ENCODE measurements at regions of chr6 and their contacts with region 1.

Region 1: GRCh38 chr6:17808609-17809008 is 101.9 kb upstream of the NUP153 start:
- DNase-seq: no peak
- ATAC-seq: no peak
- H3K4me3 ChIP-seq: no peak overlapping the region
- H3K27ac ChIP-seq: no peak overlapping the region
- H3K4me1 ChIP-seq: no peaks in the 10 kb centered on the region
- H3K27me3 ChIP-seq: no peaks in the 10 kb centered on the region
- CTCF ChIP-seq: no peak

Region 2: DNA sequence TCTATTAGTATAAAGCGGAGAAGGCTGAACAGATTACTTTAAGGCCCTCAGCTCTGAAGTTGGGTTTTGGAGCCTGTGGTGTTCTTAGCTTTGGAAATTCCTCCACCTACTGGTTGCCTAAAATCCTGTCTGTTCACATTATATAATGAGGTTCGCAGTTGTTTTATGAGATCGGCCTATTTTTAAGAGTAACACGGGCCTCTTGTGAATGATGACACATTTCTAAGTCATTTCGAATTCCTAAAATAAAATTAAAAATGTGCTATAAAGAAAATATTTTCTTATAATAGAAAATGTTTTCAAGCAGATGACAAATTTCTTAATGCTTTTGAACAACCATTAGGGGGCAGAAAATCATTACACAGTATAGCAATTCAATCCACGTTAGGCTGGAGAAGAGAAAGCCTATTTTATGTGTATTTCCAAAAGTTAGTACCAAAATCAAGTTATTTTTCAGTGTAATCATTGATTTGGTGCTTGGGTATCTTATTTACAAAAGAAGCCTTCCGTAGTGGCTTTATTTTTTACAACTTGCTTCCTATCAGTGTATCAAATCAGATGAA is 224.3 kb before region 1 on chr6:
- intact Hi-C with region 1: loop called in 1 of 2 experiments (anchors 10 kb)
- DNase-seq: no peak
- ATAC-seq: peak; percentile 74 to 85 (median 80)
- H3K4me3 ChIP-seq: peak overlapping the region; percentile 39
- H3K27ac ChIP-seq: peak overlapping the region; percentile 76
- H3K4me1 ChIP-seq: peaks cover 10% of the 10 kb centered on the region
- H3K27me3 ChIP-seq: no peaks in the 10 kb centered on the region
- CTCF ChIP-seq: peak; percentile 81

Measured in psoas muscle (tissue), 8 donors.